WTC11 (cell line): ENCODE measurements at regions of chr5 and their contacts with region 1.

Region 1: GRCh38 chr5:151315998-151316597 is 12.5 kb upstream of the SLC36A3 start:
- DNase-seq: peak; percentile 78
- ATAC-seq: peak; percentile 76
- H3K4me3 Mint-ChIP-seq: no peak overlapping the region
- H3K27ac Mint-ChIP-seq: no peak overlapping the region
- H3K4me1 Mint-ChIP-seq: peaks cover 18% of the 10 kb centered on the region
- H3K27me3 Mint-ChIP-seq: no peaks in the 10 kb centered on the region
- CTCF ChIP-seq: peak; percentile 78

Region 2: DNA sequence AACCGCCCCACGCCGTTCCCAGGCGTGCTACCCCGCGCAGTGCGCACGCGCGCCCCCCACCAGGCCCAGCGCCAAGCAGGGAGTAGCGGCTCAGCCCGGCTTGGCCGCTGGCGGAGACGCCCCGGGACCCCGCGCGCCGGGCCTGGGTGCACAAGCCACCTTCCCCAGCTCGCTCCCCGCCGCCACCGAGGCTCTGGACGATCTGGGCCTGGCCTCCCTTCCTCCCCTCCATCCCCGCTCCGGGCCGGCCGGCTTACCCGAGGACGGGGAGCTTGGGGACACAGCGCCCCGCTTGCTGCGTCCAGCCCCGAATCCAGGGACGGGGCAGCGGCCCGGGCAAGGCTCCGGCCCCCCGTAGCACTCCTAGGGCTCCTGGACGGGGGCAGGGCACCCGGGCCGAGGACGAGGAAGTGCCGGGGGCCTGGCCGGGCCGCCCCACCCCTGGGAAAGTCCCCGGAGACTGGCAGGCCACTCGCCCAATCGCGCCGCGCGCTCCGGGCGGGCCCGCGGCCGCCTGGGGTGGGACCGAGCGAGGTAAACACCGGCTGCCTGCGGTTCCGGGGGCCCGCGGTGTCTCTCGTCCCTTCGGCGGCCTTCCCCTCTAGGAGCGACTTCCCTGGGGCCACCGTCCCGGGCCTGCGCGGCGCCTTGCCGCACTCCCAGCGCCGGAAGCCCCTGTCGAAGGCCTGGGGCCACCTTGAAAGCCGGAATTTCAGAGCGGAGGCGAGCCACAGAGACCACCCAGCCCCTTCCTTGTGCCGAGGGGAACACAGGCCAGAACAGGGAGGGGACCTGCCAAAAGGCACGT is 235.3 kb before region 1 on chr5 and contains the start of gene TNIP1:
- CTCF ChIA-PET with region 1: no interaction called
- POLR2A ChIA-PET with region 1: no interaction called
- DNase-seq: peak; percentile 82
- ATAC-seq: peak; percentile 76
- H3K4me3 Mint-ChIP-seq: peak within 1 kb of the TSS; percentile 83
- H3K27ac Mint-ChIP-seq: peak within 1 kb of the TSS; percentile 84; the same call in 1 of the 2 replicates
- H3K4me1 Mint-ChIP-seq: peaks cover 32% of the 10 kb centered on the region
- H3K27me3 Mint-ChIP-seq: no peaks in the 10 kb centered on the region
- CTCF ChIP-seq: no peak
- total RNA-seq, gene TNIP1: 41.1 to 48.9 TPM (median 47.0 TPM) in 3 replicates

Region 3: DNA sequence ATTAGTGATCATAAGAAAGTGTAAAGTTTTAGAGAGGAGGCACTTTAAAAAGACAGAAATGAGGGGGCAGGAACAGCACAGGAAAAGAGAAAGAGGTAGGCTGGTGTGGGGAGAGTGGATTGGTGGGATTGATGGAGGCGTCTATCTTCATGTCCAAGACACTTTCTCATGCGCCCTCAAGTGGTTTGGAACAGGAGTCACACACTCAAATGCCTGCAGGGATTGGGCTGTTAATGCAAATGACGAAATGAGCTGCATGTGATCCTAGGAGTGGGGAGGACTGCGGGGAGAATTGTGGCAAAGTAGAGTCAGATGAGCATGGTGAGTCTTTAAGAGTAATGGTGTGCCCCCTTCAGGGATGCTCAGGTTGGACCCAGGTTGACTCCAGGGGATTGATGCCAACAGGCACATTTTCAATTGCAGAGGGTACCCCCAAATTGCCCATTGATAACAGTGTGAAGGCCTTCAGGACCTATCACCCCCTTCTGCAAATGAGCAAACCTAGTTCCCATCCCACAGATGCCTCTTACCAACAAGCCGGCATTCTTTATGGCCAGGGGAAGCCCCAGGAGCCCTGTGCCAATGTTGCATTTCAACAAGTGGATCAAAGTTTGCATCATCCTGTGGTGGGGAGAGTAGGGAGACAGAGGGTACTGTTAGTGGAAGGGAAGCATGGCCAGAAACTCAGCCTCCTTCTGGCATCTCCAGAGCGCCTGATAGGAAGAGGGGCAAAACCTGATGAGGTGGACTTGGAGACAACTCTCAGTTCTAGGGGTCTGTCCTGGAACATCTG is 17.8 kb before region 1 on chr5:
- CTCF ChIA-PET with region 1: interaction called, 19 read pairs
- POLR2A ChIA-PET with region 1: no interaction called
- DNase-seq: peak; percentile 49
- ATAC-seq: peak; percentile 87
- H3K4me3 Mint-ChIP-seq: no peak overlapping the region
- H3K27ac Mint-ChIP-seq: no peak overlapping the region
- H3K4me1 Mint-ChIP-seq: peaks cover 11% of the 10 kb centered on the region
- H3K27me3 Mint-ChIP-seq: no peaks in the 10 kb centered on the region; the same call in 1 of the 2 replicates
- CTCF ChIP-seq: no peak